H1 (cell line): ENCODE measurements at regions of chr9 and their contacts with region 1.

Region 1: DNA sequence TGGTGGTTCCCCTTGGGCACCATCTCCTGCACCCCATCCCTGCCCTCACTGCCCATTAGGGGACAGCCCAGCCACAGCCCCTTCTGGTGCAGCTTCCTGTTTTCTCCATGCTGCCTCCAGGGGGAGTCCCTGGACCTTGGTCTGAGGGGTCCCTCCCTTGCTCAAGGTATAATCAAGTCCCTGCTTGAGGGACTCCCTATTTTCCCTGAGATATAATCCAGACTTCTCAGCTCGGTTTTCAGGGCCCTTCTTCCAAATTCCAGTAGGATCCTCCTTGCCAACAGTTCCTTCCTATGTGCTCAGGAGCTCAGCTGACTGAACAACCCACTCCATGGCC is 30.4 kb upstream of the DAB2IP start:
- DNase-seq: peak in 1 of 2 experiments; percentile 76
- H3K4me3 ChIP-seq: no peak overlapping the region
- H3K27ac ChIP-seq: no peak overlapping the region
- H3K4me1 ChIP-seq: no peaks in the 10 kb centered on the region
- H3K27me3 ChIP-seq: no peaks in the 10 kb centered on the region
- CTCF ChIP-seq: peak; percentile 84 to 92 (median 87)
- EP300 ChIP-seq: no peak
- POLR2A ChIP-seq: no peak
- RAD21 ChIP-seq: peak; percentile 68 to 83

Region 2: DNA sequence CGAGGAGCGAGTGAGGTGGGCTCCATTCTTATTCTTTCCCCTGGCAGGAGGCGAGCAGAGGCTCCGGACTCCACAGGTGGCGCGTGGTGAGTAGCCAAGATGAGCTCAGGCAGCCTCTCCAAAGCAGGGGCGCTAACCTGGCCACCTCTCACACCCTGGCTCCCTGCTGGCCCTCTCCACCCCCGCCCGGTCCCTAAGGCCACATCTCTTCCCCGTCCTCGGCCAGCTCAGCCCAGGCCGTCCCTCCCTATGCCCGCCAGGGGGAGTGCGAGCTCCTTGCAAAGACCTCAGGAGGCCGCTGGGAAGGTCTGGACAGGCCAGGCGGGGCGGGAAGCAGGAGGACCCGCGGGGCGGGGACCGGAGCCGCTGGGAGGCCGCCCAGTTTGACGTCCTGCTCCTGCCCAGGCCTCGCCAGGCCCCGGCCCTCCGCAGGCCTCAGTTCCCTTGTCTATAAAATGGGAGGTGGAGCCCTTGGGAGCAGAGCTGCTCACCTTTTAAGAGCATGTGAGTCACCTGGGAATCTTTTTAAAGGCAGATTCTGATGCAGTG is 75.1 kb before region 1 on chr9:
- CTCF ChIA-PET with region 1: interaction called, 26 read pairs
- POLR2A ChIA-PET with region 1: no interaction called
- DNase-seq: peak; percentile 87 to 97
- H3K4me3 ChIP-seq: peak overlapping the region in 1 of 4 experiments; percentile 42; a peak in 3 of 8 replicates
- H3K27ac ChIP-seq: no peak overlapping the region
- H3K4me1 ChIP-seq: peaks cover 0 to 5% (median under 1%) of the 10 kb centered on the region in 4 experiments; a peak in 2 of 7 replicates
- H3K27me3 ChIP-seq: peaks cover 0 to 6% (median 4%) of the 10 kb centered on the region in 4 experiments; a peak in 3 of 7 replicates
- CTCF ChIP-seq: peak; percentile 93 to 98 (median 97)
- EP300 ChIP-seq: peak in 1 of 2 experiments; percentile 22; a peak in 1 of 3 replicates
- POLR2A ChIP-seq: no peak
- RAD21 ChIP-seq: peak; percentile 95 to 99

Region 3: DNA sequence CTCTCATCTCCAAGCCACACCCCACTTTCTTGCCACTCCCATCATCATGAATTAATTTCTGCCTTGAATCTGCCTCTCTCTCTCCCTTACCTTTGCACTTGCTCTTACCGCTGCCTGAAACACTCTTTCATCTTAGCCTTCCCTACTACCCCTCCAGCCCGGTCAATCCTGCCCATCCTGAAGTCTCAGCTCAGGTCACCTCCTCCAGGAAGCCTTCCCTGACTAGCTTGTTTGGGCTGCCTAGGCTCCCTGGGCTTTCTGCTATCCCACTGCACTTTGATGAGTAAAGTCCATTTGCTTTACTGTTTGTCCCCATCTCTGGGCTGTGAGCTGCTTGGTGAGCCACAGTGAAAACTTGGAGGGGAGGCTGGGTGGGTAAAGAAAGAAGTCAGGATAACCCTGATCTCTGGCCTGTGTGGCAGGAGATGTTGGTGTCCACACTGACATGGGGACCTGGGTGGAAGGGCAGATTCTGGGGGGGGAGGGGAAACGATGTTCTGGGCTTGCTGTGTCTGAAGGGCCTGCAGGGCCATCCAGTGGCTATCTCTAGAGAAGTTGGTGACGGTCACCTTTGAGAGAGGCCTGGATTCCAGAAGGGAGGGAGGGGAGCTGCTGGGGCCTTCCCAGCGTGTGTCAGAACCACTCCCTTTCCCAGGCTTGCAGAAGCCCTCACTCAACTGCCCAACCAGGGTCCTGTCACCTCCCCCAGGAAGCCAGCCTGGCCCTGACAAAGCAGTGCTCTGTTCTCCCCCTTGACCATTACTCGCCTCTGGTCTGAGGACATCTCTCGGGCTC is 44.6 kb before region 1 on chr9:
- CTCF ChIA-PET with region 1: interaction called, 17 read pairs
- POLR2A ChIA-PET with region 1: no interaction called
- DNase-seq: no peak
- H3K4me3 ChIP-seq: no peak overlapping the region
- H3K27ac ChIP-seq: no peak overlapping the region
- H3K4me1 ChIP-seq: peaks cover 0 to 5% (median 2%) of the 10 kb centered on the region in 4 experiments; a peak in 3 of 7 replicates
- H3K27me3 ChIP-seq: no peaks in the 10 kb centered on the region; a peak in 2 of 7 replicates
- CTCF ChIP-seq: no peak
- EP300 ChIP-seq: no peak
- POLR2A ChIP-seq: no peak
- RAD21 ChIP-seq: peak in 1 of 2 experiments; percentile 22; a peak in 2 of 4 replicates

Region 4: GRCh38 chr9:121609845-121610570 is 11.1 kb before region 1 on chr9:
- CTCF ChIA-PET with region 1: interaction called, 56 read pairs
- POLR2A ChIA-PET with region 1: interaction called, 4 read pairs
- DNase-seq: no peak
- H3K4me3 ChIP-seq: no peak overlapping the region
- H3K27ac ChIP-seq: no peak overlapping the region
- H3K4me1 ChIP-seq: peaks cover 0 to 10% (median 5%) of the 10 kb centered on the region in 4 experiments; a peak in 5 of 7 replicates
- H3K27me3 ChIP-seq: no peaks in the 10 kb centered on the region
- CTCF ChIP-seq: no peak
- EP300 ChIP-seq: no peak
- POLR2A ChIP-seq: no peak
- RAD21 ChIP-seq: no peak

Region 5: GRCh38 chr9:121640076-121640475 is 19.0 kb after region 1 on chr9:
- CTCF ChIA-PET with region 1: interaction called, 76 read pairs
- POLR2A ChIA-PET with region 1: no interaction called
- DNase-seq: peak in 1 of 2 experiments; percentile 86
- H3K4me3 ChIP-seq: no peak overlapping the region
- H3K27ac ChIP-seq: no peak overlapping the region
- H3K4me1 ChIP-seq: peaks cover 0 to 21% (median 12%) of the 10 kb centered on the region in 4 experiments; a peak in 5 of 7 replicates
- H3K27me3 ChIP-seq: no peaks in the 10 kb centered on the region
- CTCF ChIP-seq: peak; percentile 58 to 69 (median 62)
- EP300 ChIP-seq: no peak
- POLR2A ChIP-seq: no peak
- RAD21 ChIP-seq: peak; percentile 73 to 80

Region 6: DNA sequence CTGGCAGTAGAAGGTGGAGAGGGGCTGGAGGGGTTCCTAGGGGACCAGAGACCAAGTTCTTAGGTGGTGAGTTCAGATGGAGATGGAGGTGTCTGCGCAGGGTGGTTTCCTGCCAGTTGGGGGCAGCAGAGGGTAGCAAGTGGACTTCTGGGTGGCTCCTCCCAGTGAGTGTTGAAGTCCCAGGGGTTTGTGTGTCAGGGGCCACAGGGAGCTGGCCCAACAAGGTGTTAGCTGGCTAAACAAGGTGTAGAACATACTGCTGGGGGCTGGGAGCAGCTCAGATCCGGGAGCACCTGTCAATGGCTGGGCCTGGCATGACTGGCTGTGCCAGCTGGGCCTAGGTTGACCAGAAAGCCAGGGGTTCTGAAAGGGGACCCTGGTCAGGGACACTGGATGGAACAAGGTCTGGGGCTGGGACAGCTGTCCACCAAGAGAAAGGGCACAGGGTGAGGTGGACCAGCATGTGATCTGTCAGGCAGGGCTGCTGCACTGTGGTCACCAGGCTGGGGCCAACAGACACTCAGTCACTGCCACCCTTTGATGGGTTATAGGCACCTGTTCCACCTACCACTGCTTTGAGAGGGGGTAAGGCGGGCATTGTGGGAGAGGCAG is 66.0 kb after region 1 on chr9:
- CTCF ChIA-PET with region 1: interaction called, 31 read pairs
- POLR2A ChIA-PET with region 1: no interaction called
- DNase-seq: peak in 1 of 2 experiments; percentile 94
- H3K4me3 ChIP-seq: no peak overlapping the region
- H3K27ac ChIP-seq: no peak overlapping the region
- H3K4me1 ChIP-seq: peaks cover 2 to 6% (median 4%) of the 10 kb centered on the region in 4 experiments
- H3K27me3 ChIP-seq: no peaks in the 10 kb centered on the region; a peak in 1 of 7 replicates
- CTCF ChIP-seq: peak; percentile 89 to 95 (median 90)
- EP300 ChIP-seq: no peak
- POLR2A ChIP-seq: no peak
- RAD21 ChIP-seq: peak; percentile 87 to 90

Region 7: DNA sequence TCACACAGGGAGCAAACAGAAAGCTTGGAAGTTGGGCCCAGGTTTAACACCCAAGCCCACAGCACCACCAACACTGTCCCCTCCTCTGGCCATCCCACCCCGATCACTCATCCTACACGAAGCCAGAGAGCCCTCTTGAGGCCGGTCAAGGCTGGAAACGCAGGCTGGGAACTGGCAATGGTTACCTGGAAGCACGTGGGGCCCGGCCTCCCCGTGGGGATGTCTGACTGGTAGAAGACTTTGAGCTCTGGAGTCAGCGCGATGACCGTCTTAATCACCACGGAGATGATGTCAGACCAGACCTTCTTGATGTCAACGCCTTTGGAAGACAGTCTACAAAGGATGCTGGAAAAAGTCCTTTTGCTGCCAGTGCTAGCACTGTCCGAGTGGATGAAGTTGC is 367.9 kb after region 1 on chr9:
- CTCF ChIA-PET with region 1: interaction called, 18 read pairs
- POLR2A ChIA-PET with region 1: no interaction called
- DNase-seq: peak; percentile 33 to 75
- H3K4me3 ChIP-seq: no peak overlapping the region
- H3K27ac ChIP-seq: no peak overlapping the region
- H3K4me1 ChIP-seq: no peaks in the 10 kb centered on the region
- H3K27me3 ChIP-seq: no peaks in the 10 kb centered on the region; a peak in 2 of 7 replicates
- CTCF ChIP-seq: peak; percentile 73 to 84 (median 80)
- EP300 ChIP-seq: no peak
- POLR2A ChIP-seq: no peak
- RAD21 ChIP-seq: peak; percentile 86 to 91